ENCODE measurements at regions of chr6 and their contacts with region 1.

Region 1: DNA sequence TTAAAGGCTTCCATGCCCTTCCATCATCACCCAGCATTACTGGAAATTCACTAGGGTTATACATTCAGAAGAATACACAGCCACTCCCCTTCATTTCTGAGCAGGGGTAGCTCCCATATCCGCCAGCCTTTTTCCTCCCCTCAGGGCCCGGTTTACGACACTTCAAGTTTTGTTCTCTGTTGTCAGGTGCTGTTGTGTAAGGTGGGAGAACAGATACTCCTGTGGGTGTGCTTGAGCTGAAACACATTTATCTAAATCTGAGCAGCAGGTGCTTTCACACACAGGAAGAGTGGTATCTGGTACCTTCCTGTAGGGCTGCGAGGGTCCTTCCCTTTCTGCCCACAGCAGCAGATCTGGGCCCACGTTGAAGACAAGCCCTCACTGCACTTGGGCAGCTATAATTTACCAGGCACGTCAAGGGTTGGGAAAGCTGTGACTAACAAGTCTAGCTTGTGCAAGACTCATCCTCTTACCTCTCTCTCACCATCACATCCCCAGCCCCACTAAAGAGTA is 215.8 kb upstream of the RREB1 start:
- DNase-seq: no peak
- CTCF ChIP-seq: no peak

Region 2: GRCh38 chr6:6881438-6882233 is 10.4 kb before region 1 on chr6:
- CTCF ChIA-PET with region 1: interaction called, 11 read pairs
- POLR2A ChIA-PET with region 1: no interaction called
- DNase-seq: no peak
- CTCF ChIP-seq: no peak